PC-9 (cell line): ENCODE measurements at regions of chr9 and their contacts with region 1.

Region 1: GRCh38 chr9:76451234-76451633 is 7.7 kb upstream of the GCNT1 start:
- DNase-seq: no peak
- H3K4me3 ChIP-seq: no peak overlapping the region
- H3K27ac ChIP-seq: no peak overlapping the region
- H3K4me1 ChIP-seq: peaks cover 13% of the 10 kb centered on the region
- H3K27me3 ChIP-seq: no peaks in the 10 kb centered on the region
- CTCF ChIP-seq: no peak

Region 2: GRCh38 chr9:76086539-76086938 is 364.7 kb before region 1 on chr9:
- CTCF ChIA-PET with region 1: no interaction called
- POLR2A ChIA-PET with region 1: no interaction called
- intact Hi-C with region 1: no loop called
- DNase-seq: no peak
- H3K4me3 ChIP-seq: no peak overlapping the region
- H3K27ac ChIP-seq: no peak overlapping the region
- H3K4me1 ChIP-seq: no peaks in the 10 kb centered on the region
- H3K27me3 ChIP-seq: no peaks in the 10 kb centered on the region
- CTCF ChIP-seq: no peak

Region 3: DNA sequence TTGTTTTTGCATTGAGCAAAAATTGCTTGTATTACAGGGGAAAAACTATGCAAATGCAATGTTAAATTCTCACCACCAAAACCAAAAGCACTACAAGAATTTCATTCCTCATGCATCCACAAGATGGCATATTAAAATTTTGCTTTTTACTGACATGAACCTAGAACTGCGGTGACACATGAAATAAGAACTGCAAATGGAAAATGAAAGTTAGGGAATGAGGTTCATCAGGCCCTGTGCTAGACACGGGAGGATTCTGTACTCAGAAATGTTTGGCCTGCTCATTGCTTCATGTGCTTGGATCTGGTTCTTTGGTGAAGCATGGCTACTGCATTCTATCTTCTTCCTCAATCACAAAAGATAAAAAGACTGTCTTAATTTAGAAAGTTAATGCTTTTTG is 47.9 kb before region 1 on chr9:
- CTCF ChIA-PET with region 1: no interaction called
- POLR2A ChIA-PET with region 1: no interaction called
- intact Hi-C with region 1: loop called (anchors 1 kb)
- DNase-seq: peak in 1 of 2 experiments; percentile 68
- H3K4me3 ChIP-seq: 0 out of 2 replicates have a peak overlapping the region, but pooled peaks have one; percentile 15
- H3K27ac ChIP-seq: no peak overlapping the region
- H3K4me1 ChIP-seq: peaks cover 37% of the 10 kb centered on the region
- H3K27me3 ChIP-seq: no peaks in the 10 kb centered on the region
- CTCF ChIP-seq: peak; percentile 58; the same call in 1 of the 2 replicates

Region 4: DNA sequence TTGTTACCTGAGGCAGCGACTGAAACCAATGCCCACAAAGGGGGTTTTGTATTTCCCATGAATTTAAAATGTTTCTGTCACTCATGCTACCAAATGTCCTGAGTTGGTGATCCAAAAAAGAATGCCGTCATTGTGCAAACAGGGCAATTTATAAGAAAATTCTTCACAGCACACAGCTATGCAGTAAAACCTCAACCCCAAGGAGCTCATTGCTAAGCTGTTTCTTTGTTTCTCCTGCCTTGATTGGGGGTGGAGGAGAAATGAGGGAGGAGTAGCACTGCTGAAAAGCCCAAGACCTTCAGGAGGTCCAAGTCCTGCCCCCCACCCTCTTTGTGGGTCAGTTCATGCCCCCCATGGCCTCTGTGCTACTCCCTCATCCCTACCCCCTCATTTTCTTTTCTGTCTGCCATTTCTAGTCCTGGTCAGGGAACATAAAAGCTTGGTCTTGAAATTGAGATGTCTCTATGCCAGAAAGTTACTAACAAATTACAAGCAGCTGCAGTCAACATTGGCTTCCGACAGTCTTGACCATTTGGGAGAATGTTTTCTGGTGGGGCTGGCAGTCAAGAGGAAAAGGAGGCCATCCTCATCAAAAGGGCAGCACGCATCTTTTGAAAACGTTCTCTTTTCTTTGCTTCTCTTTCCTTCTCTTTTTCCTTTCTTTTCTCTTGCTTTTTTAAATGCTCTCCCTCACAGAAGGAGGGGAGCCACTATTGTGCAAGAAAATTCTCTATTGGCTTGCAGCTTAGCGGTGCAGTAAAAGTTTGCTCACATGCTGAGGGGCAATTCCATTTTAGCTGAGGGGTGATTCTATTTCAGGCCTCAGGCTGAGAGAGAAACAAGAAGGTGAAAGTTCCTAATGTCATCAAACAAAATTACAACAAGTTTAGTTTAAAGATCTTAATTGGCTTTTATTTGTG is 141.1 kb after region 1 on chr9:
- CTCF ChIA-PET with region 1: no interaction called
- POLR2A ChIA-PET with region 1: interaction called, 27 read pairs
- intact Hi-C with region 1: no loop called
- DNase-seq: no peak
- H3K4me3 ChIP-seq: no peak overlapping the region
- H3K27ac ChIP-seq: no peak overlapping the region
- H3K4me1 ChIP-seq: peaks cover 7% of the 10 kb centered on the region
- H3K27me3 ChIP-seq: no peaks in the 10 kb centered on the region
- CTCF ChIP-seq: no peak

Region 5: DNA sequence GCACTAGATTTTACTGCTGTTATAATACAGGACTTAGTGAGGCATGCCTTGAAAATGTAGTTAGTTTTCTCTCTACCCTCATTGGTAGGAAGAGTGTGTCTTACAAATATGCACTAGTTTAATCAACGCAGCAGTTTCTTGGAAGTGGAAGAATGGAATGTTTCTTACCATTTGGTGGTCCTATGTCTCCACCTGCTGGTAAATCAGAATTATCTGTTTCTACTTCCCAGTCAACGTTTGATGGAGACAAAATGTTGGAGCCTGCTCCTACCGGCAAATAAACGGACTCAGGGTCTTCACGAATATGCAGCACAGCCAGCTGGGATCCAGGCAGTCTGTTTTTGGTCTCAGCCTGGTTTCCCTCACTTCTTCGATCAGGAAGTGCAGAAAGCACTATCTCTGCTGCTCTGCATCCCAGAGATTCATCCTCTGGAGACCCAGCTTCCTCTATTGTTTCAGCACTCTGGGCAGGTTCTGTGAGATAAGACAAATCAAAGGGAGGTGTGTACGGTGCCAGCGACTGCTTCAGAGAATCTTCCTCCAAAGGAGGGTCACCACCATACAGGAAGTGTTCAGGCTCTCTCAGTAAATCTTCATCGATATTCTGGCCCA is 253.5 kb after region 1 on chr9:
- CTCF ChIA-PET with region 1: no interaction called
- POLR2A ChIA-PET with region 1: no interaction called
- intact Hi-C with region 1: loop called (anchors 1 kb)
- DNase-seq: peak; percentile 25 to 64
- H3K4me3 ChIP-seq: no peak overlapping the region
- H3K27ac ChIP-seq: no peak overlapping the region
- H3K4me1 ChIP-seq: no peaks in the 10 kb centered on the region
- H3K27me3 ChIP-seq: peaks cover 50% of the 10 kb centered on the region
- CTCF ChIP-seq: peak; percentile 85

Region 6: DNA sequence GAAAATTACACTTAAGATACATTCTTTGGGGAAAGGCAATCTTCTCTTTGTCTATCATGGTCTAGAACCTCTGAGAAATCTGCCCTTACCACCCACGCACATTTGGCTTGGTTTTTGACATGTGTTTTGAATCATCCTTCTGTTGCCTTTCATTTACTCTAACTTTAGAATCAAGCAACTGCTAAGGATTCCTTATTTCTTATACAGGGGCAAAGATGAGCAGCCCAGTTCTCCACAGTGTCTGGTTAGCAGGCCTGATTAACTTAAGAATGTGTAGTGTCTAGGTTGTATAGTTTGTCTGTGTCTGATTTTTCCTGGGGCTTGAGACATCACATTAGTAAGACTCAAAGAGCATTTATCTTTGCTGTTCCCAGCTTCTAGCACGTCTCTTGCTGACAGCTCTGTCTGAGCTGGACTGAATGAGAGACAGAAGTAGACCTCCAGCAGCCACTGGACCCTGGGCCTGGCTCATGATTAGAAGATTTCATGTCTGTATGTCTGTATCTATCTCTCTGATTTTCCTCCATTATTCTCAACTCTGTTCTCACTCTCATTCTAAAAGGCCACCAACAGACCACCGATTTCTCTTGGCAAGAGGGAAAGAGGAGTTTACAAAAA is 281.2 kb after region 1 on chr9:
- CTCF ChIA-PET with region 1: no interaction called
- POLR2A ChIA-PET with region 1: no interaction called
- intact Hi-C with region 1: no loop called
- DNase-seq: no peak
- H3K4me3 ChIP-seq: no peak overlapping the region
- H3K27ac ChIP-seq: no peak overlapping the region
- H3K4me1 ChIP-seq: no peaks in the 10 kb centered on the region
- H3K27me3 ChIP-seq: peaks cover 48% of the 10 kb centered on the region
- CTCF ChIP-seq: no peak